ENCODE measurements at regions of chr3 and their contacts with region 1.

Region 1: DNA sequence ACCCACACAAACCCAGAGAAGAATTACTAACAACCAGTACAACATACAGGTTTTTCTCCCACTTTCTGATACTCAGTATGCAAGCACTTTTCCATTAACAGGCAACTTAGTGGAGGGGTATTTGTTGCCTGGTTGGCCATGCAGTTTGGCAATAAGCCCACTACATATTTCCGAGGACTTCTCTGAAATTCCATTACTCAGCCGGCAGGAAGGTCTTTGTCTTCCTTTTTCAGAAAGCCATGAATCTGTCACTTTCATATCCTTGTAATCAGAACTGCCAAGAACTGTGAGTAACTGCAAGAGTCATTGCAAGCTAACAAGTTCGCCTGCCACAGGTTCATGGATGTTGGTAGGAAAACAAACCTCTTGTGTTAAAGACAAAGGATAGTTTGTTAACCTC is 422.3 kb upstream of the ROBO1 start:
- DNase-seq: peak; percentile 99
- ATAC-seq: peak; percentile 67
- H3K4me3 ChIP-seq: peak overlapping the region; percentile 28; the same call in 1 of the 2 replicates
- H3K27ac ChIP-seq: peak overlapping the region; percentile 75
- H3K4me1 ChIP-seq: peaks cover 59% of the 10 kb centered on the region
- H3K27me3 ChIP-seq: no peaks in the 10 kb centered on the region
- CTCF ChIP-seq: no peak

Region 2: GRCh38 chr3:79773291-79773690 is 416.8 kb before region 1 on chr3:
- CTCF ChIA-PET with region 1: no interaction called
- POLR2A ChIA-PET with region 1: no interaction called
- intact Hi-C with region 1: loop called (anchors 5 kb)
- DNase-seq: no peak
- ATAC-seq: no peak
- H3K4me3 ChIP-seq: no peak overlapping the region
- H3K27ac ChIP-seq: no peak overlapping the region
- H3K4me1 ChIP-seq: no peaks in the 10 kb centered on the region
- H3K27me3 ChIP-seq: 0 out of 2 replicates have a peak, but pooled peaks cover 3% of the 10 kb centered on the region
- CTCF ChIP-seq: no peak

Region 3: DNA sequence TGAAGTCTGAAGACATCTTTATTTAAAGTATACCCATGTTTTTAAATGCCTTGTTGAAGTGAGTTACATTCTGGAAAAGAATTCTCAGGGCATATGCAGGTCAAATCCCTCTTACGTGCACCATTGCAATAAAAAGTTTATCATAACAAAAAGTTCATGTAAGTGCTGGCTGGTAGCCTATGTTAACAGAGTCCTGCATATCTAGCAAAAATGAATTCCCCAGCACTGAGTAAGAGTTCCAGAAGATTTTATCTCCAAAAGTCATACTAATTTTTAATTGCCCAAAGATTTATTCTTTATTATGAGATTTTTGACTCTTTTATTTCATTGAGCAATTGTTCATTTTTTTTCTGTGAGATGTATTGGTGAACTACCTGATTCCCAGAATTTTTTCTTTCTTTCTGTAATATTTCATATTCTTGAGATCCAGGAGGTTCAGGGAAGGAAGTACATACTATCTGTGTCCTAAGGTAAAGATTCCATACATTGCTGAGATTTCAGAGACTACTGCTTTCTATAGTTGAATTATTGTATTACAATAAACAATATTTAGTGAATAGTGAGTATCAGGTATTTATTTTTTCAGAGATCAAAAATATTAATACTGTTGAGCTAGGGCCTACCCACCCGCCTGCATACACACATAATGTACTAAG is 317.4 kb before region 1 on chr3:
- CTCF ChIA-PET with region 1: no interaction called
- POLR2A ChIA-PET with region 1: no interaction called
- intact Hi-C with region 1: loop called (anchors 10 kb)
- DNase-seq: peak; percentile 94
- ATAC-seq: peak; percentile 97
- H3K4me3 ChIP-seq: no peak overlapping the region
- H3K27ac ChIP-seq: peak overlapping the region; percentile 68
- H3K4me1 ChIP-seq: peaks cover 26% of the 10 kb centered on the region
- H3K27me3 ChIP-seq: no peaks in the 10 kb centered on the region
- CTCF ChIP-seq: no peak

Region 4: GRCh38 chr3:80000039-80000438 is 190.0 kb before region 1 on chr3:
- CTCF ChIA-PET with region 1: no interaction called
- POLR2A ChIA-PET with region 1: no interaction called
- intact Hi-C with region 1: loop called (anchors 1 kb)
- DNase-seq: peak; percentile 91
- ATAC-seq: peak; percentile 78
- H3K4me3 ChIP-seq: peak overlapping the region; percentile 20; the same call in 1 of the 2 replicates
- H3K27ac ChIP-seq: peak overlapping the region; percentile 82
- H3K4me1 ChIP-seq: peaks cover 39% of the 10 kb centered on the region
- H3K27me3 ChIP-seq: no peaks in the 10 kb centered on the region
- CTCF ChIP-seq: no peak

Region 5: DNA sequence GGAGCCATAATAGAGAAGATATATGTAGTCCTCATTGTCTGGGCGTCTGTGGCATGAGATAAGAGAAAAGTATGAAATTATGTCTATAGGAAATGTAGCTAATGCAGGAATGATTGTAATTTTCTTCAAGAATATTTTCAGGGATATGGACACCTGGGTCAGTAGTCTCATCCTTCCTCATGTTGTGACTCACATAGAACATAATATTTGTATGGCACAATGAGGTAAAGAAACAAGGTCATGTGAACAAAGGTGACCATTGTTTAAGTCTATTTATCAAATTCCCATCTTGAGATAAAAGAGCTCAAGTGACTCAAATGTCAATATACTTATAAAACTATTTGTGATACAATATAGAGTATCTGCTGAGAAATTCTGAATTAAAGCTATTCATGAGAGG is 76.7 kb before region 1 on chr3:
- CTCF ChIA-PET with region 1: no interaction called
- POLR2A ChIA-PET with region 1: no interaction called
- intact Hi-C with region 1: loop called (anchors 5 kb)
- DNase-seq: peak; percentile 76
- ATAC-seq: peak; percentile 93
- H3K4me3 ChIP-seq: no peak overlapping the region
- H3K27ac ChIP-seq: peak overlapping the region; percentile 57
- H3K4me1 ChIP-seq: peaks cover 11% of the 10 kb centered on the region
- H3K27me3 ChIP-seq: no peaks in the 10 kb centered on the region
- CTCF ChIP-seq: no peak

Region 6: DNA sequence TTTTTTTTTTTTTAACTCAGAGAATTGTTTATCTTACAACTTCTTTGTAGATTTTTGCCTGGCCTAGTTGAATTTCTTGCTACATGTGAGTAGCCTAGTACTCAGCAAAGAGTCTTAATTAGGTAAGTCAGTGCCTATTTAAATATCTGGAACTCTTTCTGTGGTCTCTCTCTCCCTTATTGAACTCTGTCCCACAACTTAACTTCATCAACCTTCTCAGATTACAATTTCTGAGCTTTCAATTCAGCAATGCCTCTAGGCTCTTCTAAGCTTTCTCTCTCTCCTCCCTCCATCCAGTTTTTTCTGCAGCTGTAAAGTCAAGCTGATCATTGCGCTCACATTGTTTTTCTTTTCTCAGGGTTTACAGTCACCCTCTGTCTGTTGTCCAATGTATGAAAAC is 95.3 kb after region 1 on chr3:
- CTCF ChIA-PET with region 1: no interaction called
- POLR2A ChIA-PET with region 1: no interaction called
- intact Hi-C with region 1: loop called (anchors 2 kb)
- DNase-seq: peak; percentile 57
- ATAC-seq: peak; percentile 51
- H3K4me3 ChIP-seq: no peak overlapping the region
- H3K27ac ChIP-seq: no peak overlapping the region
- H3K4me1 ChIP-seq: peaks cover 31% of the 10 kb centered on the region
- H3K27me3 ChIP-seq: no peaks in the 10 kb centered on the region
- CTCF ChIP-seq: no peak

Region 7: DNA sequence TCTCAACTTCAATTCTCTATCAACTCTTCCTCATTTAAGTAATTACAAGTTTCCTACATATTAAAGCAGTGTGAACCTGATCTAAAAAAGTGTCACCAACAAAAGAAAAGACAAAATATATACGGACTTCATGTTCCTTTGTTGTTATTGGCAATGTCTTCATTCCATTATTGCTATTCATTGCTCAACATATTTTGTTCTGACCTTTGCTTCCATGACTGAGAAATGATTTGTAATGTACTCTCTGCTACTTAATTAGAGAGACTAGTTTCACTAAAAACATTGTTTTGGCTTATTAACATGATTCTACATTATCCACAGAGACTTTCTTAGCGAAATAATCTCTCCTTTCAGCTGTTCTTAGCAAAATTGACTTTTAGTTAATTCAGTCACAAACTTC is 234.9 kb after region 1 on chr3:
- CTCF ChIA-PET with region 1: no interaction called
- POLR2A ChIA-PET with region 1: no interaction called
- intact Hi-C with region 1: no loop called
- DNase-seq: no peak
- ATAC-seq: no peak
- H3K4me3 ChIP-seq: no peak overlapping the region
- H3K27ac ChIP-seq: no peak overlapping the region
- H3K4me1 ChIP-seq: no peaks in the 10 kb centered on the region
- H3K27me3 ChIP-seq: no peaks in the 10 kb centered on the region
- CTCF ChIP-seq: no peak

Region 8: DNA sequence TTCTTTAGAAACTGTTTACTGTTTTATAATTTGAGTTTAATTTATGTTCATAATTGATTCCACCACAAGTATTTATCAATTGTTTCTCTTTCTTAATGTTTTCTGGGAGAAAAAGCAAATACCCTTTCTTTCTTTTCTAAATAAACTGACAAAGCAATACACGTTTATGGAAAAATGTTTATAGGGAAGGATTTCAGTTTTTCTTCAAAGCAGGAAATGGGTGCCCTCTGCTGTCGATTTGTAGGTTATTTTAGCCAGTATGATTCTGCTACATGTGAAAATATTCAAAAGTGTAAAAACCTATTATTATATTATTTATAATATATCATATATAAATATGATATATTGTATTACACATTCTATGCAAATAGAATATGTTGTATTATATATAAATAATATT is 498.8 kb after region 1 on chr3:
- CTCF ChIA-PET with region 1: no interaction called
- POLR2A ChIA-PET with region 1: interaction called, 14 read pairs
- intact Hi-C with region 1: loop called (anchors 5 kb)
- DNase-seq: peak; percentile 57
- ATAC-seq: peak; percentile 57
- H3K4me3 ChIP-seq: no peak overlapping the region
- H3K27ac ChIP-seq: no peak overlapping the region
- H3K4me1 ChIP-seq: no peaks in the 10 kb centered on the region
- H3K27me3 ChIP-seq: no peaks in the 10 kb centered on the region
- CTCF ChIP-seq: peak; percentile 55